ENCODE measurements at regions of chr14 and their contacts with region 1.

Region 1: DNA sequence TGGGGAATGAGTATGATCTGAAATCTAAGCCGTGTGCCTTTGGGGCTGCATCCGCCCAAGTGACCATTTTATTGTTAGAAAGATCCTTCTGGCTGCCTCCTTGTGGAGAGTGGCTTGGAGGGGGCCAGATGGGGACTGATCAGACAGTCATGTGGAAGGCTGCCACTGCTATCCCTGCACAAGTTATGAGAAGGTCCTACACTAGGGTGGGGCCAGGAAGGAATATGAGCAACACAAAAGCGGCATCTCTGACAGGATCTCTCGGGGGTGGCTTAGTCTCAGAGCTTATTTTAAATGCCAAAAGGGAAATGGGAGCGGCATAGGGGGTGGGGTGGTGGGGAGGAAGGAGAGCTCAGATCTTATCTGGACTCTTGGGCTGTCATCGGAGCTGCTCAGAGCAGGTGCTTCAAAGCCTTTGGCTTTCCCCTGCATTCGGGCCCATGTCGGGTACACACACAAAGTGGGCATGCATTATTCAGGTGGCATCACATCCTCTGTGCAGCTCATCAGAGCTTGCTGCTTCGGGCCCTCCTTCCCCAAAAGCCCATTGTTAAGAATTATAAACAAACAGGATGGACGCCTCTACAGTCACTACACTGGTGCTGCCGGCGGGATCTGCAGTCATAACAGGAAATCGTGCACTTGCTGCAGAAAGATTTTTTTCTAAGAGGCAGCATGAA is 805.4 kb downstream of the VRK1 start:
- DNase-seq: peak; percentile 56 to 89 (median 83)
- H3K4me3 ChIP-seq: peak overlapping the region; percentile 40
- H3K4me3 Mint-ChIP-seq: no peak overlapping the region
- H3K27ac ChIP-seq: peak overlapping the region; percentile 52
- H3K27ac Mint-ChIP-seq: no peak overlapping the region
- H3K4me1 ChIP-seq: peaks cover 63% of the 10 kb centered on the region
- H3K4me1 Mint-ChIP-seq: peaks cover 8 to 38% (median 15%) of the 10 kb centered on the region in 3 donors
- H3K27me3 ChIP-seq: no peaks in the 10 kb centered on the region
- H3K27me3 Mint-ChIP-seq: no peaks in the 10 kb centered on the region

Region 2: DNA sequence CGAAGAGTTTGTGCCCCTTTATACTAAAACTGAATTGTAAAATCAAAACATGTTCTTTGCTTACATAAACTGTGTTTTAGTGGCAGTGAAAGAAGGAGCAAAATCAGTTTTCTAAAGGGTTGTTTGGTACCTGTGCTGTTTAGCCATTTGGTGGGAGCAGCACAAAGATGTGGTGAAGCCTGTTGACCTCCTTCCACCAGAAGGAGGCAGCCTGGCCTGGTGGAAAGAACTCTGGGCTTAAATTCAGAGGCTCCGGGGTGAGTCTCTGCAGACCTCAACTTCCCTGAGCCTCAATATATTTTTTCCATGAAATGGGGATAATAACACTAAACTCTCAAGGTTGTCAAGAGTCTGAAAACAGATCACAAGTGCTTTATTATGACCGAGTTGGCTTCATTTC is 302.9 kb before region 1 on chr14:
- CTCF ChIA-PET with region 1: no interaction called
- POLR2A ChIA-PET with region 1: no interaction called
- DNase-seq: peak; percentile 4 to 51 (median 9)
- H3K4me3 ChIP-seq: no peak overlapping the region
- H3K4me3 Mint-ChIP-seq: no peak overlapping the region
- H3K27ac ChIP-seq: no peak overlapping the region
- H3K27ac Mint-ChIP-seq: no peak overlapping the region
- H3K4me1 ChIP-seq: no peaks in the 10 kb centered on the region
- H3K4me1 Mint-ChIP-seq: peaks cover 15 to 36% (median 18%) of the 10 kb centered on the region in 3 donors
- H3K27me3 ChIP-seq: no peaks in the 10 kb centered on the region
- H3K27me3 Mint-ChIP-seq: peaks cover 10 to 17% of the 10 kb centered on the region in 2 donors

Region 3: DNA sequence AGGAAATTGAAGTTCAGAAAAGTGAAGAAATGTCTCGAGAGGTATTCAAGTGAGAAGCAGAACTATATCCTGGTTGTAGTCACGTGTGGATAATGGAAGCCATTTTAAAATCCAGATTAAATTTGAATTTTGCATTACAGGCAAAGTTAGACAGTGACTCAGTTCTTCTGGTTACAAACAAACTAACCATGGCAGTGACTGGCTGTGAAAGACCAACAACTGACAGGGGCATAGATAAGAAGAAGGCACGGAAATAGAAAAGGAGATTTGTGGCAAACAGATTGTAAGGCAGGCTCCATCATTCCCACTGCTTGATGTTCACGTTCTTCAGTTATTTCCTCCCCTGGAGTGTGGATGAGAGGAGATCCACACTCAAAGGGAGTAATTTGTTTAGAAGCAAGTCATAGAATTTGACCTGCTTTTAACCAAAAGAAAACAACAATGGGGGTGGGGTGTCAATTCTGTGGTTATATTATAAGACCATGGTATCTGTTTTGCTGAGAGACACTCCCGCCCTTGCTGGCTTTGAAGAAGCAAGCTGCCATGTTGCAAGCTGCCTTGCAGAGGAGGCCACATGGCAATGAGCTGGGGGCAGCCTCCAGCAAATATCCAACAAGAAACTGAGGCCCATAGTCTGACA is 10.1 kb before region 1 on chr14:
- CTCF ChIA-PET with region 1: interaction called, 14 read pairs
- POLR2A ChIA-PET with region 1: interaction called, 5 read pairs
- DNase-seq: peak in 2 of 5 donors; percentile 53 to 54
- H3K4me3 ChIP-seq: no peak overlapping the region
- H3K4me3 Mint-ChIP-seq: peak overlapping the region in 6 of 7 donors; percentile 48 to 84 (median 73)
- H3K27ac ChIP-seq: peak overlapping the region; percentile 3
- H3K27ac Mint-ChIP-seq: peak overlapping the region; percentile 88 to 96 (median 91)
- H3K4me1 ChIP-seq: peaks cover 32% of the 10 kb centered on the region
- H3K4me1 Mint-ChIP-seq: peaks cover 62 to 89% (median 76%) of the 10 kb centered on the region in 3 donors
- H3K27me3 ChIP-seq: no peaks in the 10 kb centered on the region
- H3K27me3 Mint-ChIP-seq: no peaks in the 10 kb centered on the region

Region 4: DNA sequence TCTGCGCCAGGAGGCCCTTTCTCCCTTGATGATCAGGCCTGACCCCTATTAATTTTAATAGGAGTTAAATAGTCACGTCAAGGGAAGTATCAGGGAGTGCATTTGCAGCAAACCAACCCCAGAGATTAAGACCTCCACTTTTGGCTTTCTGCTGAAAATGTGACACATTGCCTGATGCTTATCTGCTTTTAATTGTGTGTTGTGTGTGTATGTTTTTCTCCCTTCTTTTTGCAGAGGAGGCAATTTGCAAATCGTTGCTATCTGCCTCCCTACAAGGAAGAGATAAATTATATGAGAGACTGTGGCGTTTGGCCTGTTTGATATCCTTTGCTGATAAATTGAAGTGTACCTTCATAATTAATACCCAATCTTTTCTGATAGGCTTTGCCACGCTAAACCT is 17.5 kb after region 1 on chr14:
- CTCF ChIA-PET with region 1: interaction called, 3 read pairs
- POLR2A ChIA-PET with region 1: interaction called, 12 read pairs
- DNase-seq: no peak
- H3K4me3 ChIP-seq: peak overlapping the region; percentile 35
- H3K4me3 Mint-ChIP-seq: peak overlapping the region in 6 of 7 donors; percentile 65 to 87 (median 82)
- H3K27ac ChIP-seq: no peak overlapping the region
- H3K27ac Mint-ChIP-seq: peak overlapping the region; percentile 92 to 99 (median 97)
- H3K4me1 ChIP-seq: peaks cover 45% of the 10 kb centered on the region
- H3K4me1 Mint-ChIP-seq: peaks cover 46 to 64% (median 58%) of the 10 kb centered on the region in 3 donors
- H3K27me3 ChIP-seq: no peaks in the 10 kb centered on the region
- H3K27me3 Mint-ChIP-seq: peaks cover 0 to 1% of the 10 kb centered on the region in 2 donors

Region 5: GRCh38 chr14:97707603-97708002 is 105.0 kb after region 1 on chr14:
- CTCF ChIA-PET with region 1: interaction called, 4 read pairs
- POLR2A ChIA-PET with region 1: interaction called, 14 read pairs
- DNase-seq: peak in 2 of 5 donors; percentile 24 to 62
- H3K4me3 ChIP-seq: peak overlapping the region; percentile 13
- H3K4me3 Mint-ChIP-seq: peak overlapping the region; percentile 71 to 89 (median 82)
- H3K27ac ChIP-seq: no peak overlapping the region
- H3K27ac Mint-ChIP-seq: peak overlapping the region; percentile 66 to 95 (median 90)
- H3K4me1 ChIP-seq: peaks cover 85% of the 10 kb centered on the region
- H3K4me1 Mint-ChIP-seq: peaks cover 96 to 100% (median 99%) of the 10 kb centered on the region in 3 donors
- H3K27me3 ChIP-seq: no peaks in the 10 kb centered on the region
- H3K27me3 Mint-ChIP-seq: no peaks in the 10 kb centered on the region

Measured in CD8-positive, alpha-beta memory T cell (primary cell).